ENCODE measurements at regions of chr5 and their contacts with region 1.

Region 1: DNA sequence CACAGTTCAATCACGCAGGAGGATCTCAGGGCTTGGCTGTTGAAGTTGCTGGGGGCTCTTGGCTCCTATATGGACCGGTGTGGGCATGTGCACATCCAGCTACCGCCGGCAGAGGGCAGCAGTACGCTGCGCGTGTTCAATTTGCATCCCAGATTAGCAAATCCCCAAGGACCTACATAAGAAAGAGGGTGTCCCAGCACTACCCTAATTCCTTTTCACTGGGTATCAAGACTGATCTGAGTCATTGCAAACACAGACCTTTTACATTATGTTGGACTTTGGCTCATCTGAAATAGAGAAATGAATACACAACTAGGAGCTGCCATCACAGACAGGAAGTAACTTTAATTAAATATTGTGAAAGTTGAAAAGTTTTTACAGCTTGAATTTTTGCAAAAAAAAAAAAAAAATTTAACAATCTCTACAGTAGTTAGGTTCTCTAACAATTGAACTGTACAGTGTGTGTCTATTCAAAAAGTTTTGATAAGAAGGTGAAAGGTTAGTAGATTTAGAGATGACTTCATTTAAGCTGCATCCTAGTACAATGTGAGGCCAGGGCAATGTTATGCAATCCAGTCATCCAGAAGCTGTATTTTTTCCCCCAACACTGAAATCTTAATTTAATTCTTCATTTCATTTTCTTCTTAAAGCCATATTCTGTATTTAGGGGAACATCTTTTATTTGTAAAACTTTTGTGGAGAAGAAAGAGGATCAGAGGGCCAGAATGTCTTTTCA is 404.0 kb downstream of the EBF1 start:
- DNase-seq: peak; percentile 78 to 79
- ATAC-seq: peak; percentile 70 to 88 (median 82)
- H3K4me3 ChIP-seq: no peak overlapping the region
- H3K27ac ChIP-seq: peak overlapping the region in 7 of 10 donors; percentile 4 to 69 (median 35)
- H3K4me1 ChIP-seq: peaks cover 0 to 62% (median 32%) of the 10 kb centered on the region in 9 donors
- H3K27me3 ChIP-seq: peaks cover 0 to 5% (median 0%) of the 10 kb centered on the region in 7 donors
- CTCF ChIP-seq: peak; percentile 93 to 99 (median 98)

Region 2: GRCh38 chr5:158074992-158075769 is 620.6 kb before region 1 on chr5:
- intact Hi-C with region 1: loop called in 4 of 10 experiments (anchors 5 to 10 kb)
- DNase-seq: peak; percentile 28 to 62
- ATAC-seq: peak; percentile 59 to 92 (median 82)
- H3K4me3 ChIP-seq: peak overlapping the region in 8 of 10 donors; percentile 17 to 43 (median 32)
- H3K27ac ChIP-seq: peak overlapping the region in 8 of 10 donors; percentile 15 to 78 (median 52)
- H3K4me1 ChIP-seq: peaks cover 0 to 16% (median 3%) of the 10 kb centered on the region in 9 donors
- H3K27me3 ChIP-seq: no peaks in the 10 kb centered on the region
- CTCF ChIP-seq: peak; percentile 67 to 92 (median 85)

Region 3: GRCh38 chr5:158423623-158424200 is 272.1 kb before region 1 on chr5:
- intact Hi-C with region 1: loop called in 1 of 10 experiments (anchors 5 kb)
- DNase-seq: no peak
- ATAC-seq: peak in 6 of 8 donors; percentile 48 to 73 (median 62)
- H3K4me3 ChIP-seq: no peak overlapping the region
- H3K27ac ChIP-seq: peak overlapping the region in 9 of 10 donors; percentile 45 to 84 (median 78)
- H3K4me1 ChIP-seq: peaks cover 0 to 43% (median 22%) of the 10 kb centered on the region in 9 donors
- H3K27me3 ChIP-seq: no peaks in the 10 kb centered on the region
- CTCF ChIP-seq: no peak

Region 4: DNA sequence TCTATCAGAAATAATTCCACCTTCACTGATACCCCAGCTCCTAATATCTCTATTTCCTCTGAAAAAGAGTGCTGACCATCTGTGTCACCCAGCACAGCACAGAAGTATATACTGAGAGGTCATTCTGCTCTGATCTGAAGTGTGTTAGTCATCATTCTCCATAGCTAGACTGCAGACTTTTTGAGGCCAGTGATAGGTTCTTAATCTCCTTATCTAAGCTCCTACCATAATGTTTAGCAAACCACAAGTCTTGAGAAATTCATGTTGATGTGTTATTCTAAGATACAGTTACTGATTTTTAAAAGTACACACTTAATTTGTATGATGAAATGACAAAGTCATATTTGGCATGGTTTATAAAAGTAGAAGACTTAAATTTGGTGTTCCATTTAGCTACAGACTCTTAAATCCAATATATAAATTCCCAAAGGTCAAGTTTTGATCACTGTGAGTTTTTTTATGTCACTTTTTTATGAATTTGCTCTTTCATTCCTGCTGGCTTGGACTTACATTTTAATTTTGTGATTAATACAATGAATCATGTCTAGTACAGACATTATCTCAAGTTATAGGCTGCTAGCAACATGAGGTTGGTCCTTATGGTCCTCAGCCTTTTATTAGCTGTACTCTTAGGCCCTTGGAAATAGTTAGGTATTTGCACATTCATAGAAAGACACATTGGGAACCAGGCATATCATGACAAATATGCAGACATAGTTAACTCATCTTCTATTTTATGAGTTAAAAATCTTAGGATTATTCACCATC is 23.2 kb after region 1 on chr5:
- intact Hi-C with region 1: loop called in 1 of 10 experiments (anchors 1 kb)
- DNase-seq: no peak
- ATAC-seq: peak in 1 of 8 donors; percentile 71
- H3K4me3 ChIP-seq: no peak overlapping the region
- H3K27ac ChIP-seq: peak overlapping the region in 1 of 10 donors; percentile 67
- H3K4me1 ChIP-seq: peaks cover 0 to 9% (median 0%) of the 10 kb centered on the region in 9 donors
- H3K27me3 ChIP-seq: no peaks in the 10 kb centered on the region
- CTCF ChIP-seq: no peak

Region 5: GRCh38 chr5:159049844-159050315 is 354.1 kb after region 1 on chr5:
- intact Hi-C with region 1: loop called in 2 of 10 experiments (anchors 5 kb)
- DNase-seq: peak in 1 of 2 donors; percentile 27
- ATAC-seq: peak; percentile 45 to 77 (median 62)
- H3K4me3 ChIP-seq: peak overlapping the region in 7 of 10 donors; percentile 10 to 51 (median 43)
- H3K27ac ChIP-seq: peak overlapping the region; percentile 75 to 93 (median 83)
- H3K4me1 ChIP-seq: peaks cover 0 to 82% (median 42%) of the 10 kb centered on the region in 9 donors
- H3K27me3 ChIP-seq: peaks cover 0 to 41% (median 3%) of the 10 kb centered on the region in 7 donors
- CTCF ChIP-seq: peak; percentile 14 to 66 (median 47)

Region 6: GRCh38 chr5:159133041-159133741 is 437.4 kb after region 1 on chr5:
- intact Hi-C with region 1: loop called in 1 of 10 experiments (anchors 10 kb)
- DNase-seq: peak in 1 of 2 donors; percentile 16
- ATAC-seq: peak; percentile 37 to 77 (median 52)
- H3K4me3 ChIP-seq: peak overlapping the region in 4 of 10 donors; percentile 15 to 37 (median 22)
- H3K27ac ChIP-seq: peak overlapping the region in 1 of 10 donors; percentile 15
- H3K4me1 ChIP-seq: no peaks in the 10 kb centered on the region
- H3K27me3 ChIP-seq: peaks cover 0 to 12% (median 0%) of the 10 kb centered on the region in 7 donors
- CTCF ChIP-seq: peak; percentile 70 to 88 (median 83)